ENCODE measurements at regions of chr7 and their contacts with region 1.

Region 1: GRCh38 chr7:67866054-67866453 is 869.4 kb downstream of the TYW1 start:
- DNase-seq: no peak
- ATAC-seq: no peak
- H3K4me3 Mint-ChIP-seq: no peak overlapping the region
- H3K27ac Mint-ChIP-seq: no peak overlapping the region
- H3K4me1 Mint-ChIP-seq: no peaks in the 10 kb centered on the region
- H3K27me3 Mint-ChIP-seq: no peaks in the 10 kb centered on the region

Region 2: DNA sequence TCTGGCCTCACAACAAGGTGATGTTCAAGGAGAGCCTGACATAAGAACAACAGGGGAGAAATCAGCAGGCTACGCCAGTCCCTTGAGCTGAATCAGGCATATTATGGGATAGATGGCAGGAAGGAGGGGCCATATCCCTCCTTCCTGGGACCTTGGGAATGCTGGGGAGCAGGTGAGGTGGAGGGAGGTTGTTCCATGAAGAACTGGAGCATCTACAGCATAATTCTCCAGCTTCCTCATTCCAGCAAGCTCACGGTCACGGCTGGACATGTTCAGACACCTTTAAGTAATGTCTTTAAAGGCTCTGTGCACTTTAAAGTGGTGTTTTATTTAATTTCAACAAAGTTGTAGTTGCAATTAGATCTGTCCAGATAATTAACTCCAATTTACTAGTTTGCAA is 88.9 kb before region 1 on chr7:
- CTCF ChIA-PET with region 1: no interaction called
- POLR2A ChIA-PET with region 1: no interaction called
- intact Hi-C with region 1: no loop called
- DNase-seq: no peak
- ATAC-seq: no peak
- H3K4me3 Mint-ChIP-seq: no peak overlapping the region
- H3K27ac Mint-ChIP-seq: no peak overlapping the region
- H3K4me1 Mint-ChIP-seq: no peaks in the 10 kb centered on the region
- H3K27me3 Mint-ChIP-seq: no peaks in the 10 kb centered on the region

Region 3: GRCh38 chr7:67918158-67918557 is 52.1 kb after region 1 on chr7:
- CTCF ChIA-PET with region 1: no interaction called
- POLR2A ChIA-PET with region 1: no interaction called
- intact Hi-C with region 1: loop called in 1 of 2 experiments (anchors 5 kb)
- DNase-seq: no peak
- ATAC-seq: no peak
- H3K4me3 Mint-ChIP-seq: no peak overlapping the region
- H3K27ac Mint-ChIP-seq: no peak overlapping the region
- H3K4me1 Mint-ChIP-seq: peaks cover 2% of the 10 kb centered on the region
- H3K27me3 Mint-ChIP-seq: no peaks in the 10 kb centered on the region

Region 4: DNA sequence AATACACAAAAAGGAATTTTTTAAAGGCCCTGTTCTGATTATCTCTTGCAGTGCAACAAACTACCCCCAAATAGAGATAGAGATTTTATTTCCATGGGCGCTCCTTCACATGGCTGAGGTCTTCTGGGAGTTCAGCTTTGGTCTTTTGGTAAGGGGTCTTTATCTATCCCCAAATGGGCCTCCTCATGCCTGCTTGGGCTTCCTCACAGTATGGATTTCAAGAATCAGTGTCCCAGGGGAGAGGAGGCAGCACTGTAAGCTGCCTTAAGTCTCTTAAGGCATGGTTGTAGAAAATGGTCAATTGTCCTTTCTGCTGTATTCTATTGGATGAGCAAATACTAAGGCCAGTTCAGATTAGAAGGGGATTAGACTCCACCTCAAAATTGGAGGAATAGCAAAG is 96.8 kb after region 1 on chr7:
- CTCF ChIA-PET with region 1: no interaction called
- POLR2A ChIA-PET with region 1: no interaction called
- intact Hi-C with region 1: no loop called
- DNase-seq: no peak
- ATAC-seq: no peak
- H3K4me3 Mint-ChIP-seq: no peak overlapping the region
- H3K27ac Mint-ChIP-seq: no peak overlapping the region
- H3K4me1 Mint-ChIP-seq: no peaks in the 10 kb centered on the region
- H3K27me3 Mint-ChIP-seq: no peaks in the 10 kb centered on the region

Region 5: DNA sequence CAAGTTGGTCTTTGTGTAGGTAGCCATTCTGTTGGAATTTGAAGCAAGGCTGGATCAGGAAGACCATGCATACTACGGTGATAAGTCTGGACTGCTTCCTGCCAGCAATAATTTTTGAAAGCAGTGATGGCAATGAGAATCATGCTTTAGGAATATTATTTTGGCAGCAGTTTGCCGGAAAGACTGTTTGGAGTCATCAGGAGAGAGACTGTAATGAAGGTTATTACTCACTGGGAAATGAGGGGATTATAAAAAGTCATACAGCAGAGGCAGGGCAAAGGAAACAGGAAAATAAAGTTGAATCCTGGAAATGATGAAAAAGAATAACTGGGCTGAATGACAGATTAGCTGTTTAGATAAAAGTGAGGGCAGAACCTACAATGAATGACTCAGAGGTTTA is 595.4 kb after region 1 on chr7:
- CTCF ChIA-PET with region 1: no interaction called
- POLR2A ChIA-PET with region 1: no interaction called
- intact Hi-C with region 1: no loop called
- DNase-seq: no peak
- ATAC-seq: no peak
- H3K4me3 Mint-ChIP-seq: no peak overlapping the region
- H3K27ac Mint-ChIP-seq: no peak overlapping the region
- H3K4me1 Mint-ChIP-seq: no peaks in the 10 kb centered on the region
- H3K27me3 Mint-ChIP-seq: no peaks in the 10 kb centered on the region